Heart left ventricle (tissue), 16 donors: ENCODE measurements at regions of chr13 and their contacts with region 1.

Region 1: DNA sequence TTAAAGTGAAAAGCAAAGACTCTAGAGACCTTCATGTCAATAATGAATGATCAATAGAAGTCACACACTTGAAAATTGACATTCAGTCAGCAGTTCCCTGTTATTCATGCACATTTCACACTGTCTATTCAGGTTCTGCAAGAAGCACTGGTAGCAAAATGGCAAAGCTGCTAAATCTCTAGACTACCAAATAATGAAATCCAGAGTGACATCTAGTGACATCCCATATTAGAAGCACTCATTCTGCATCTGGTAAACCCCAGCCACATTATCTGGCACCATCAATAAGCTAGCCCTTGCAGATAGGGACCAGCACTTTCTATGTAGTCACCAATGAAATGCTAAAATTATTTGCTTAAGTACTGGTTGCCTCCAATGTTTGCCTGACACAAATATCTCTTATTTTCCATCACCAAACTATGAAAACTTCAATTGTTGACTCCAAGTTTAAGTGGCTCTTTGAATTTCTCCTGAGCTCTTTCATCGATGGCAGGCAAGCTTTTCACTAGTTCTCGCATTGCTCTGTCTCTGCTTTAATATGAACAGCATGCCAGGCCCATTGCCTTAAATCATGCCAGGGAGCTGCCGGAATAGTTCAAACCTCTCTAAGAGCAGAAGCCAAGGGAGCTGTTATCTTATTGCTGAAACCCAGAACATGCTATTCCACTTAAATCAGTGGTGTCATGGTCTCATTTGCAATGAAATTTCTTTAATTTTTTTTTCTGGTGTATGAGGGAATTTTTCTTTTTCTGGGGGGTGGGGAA is 409.9 kb downstream of the MZT1 start:
- DNase-seq: no peak
- ATAC-seq: no peak
- H3K4me3 ChIP-seq: no peak overlapping the region
- H3K27ac ChIP-seq: no peak overlapping the region
- H3K4me1 ChIP-seq: no peaks in the 10 kb centered on the region
- H3K27me3 ChIP-seq: no peaks in the 10 kb centered on the region
- CTCF ChIP-seq: no peak
- POLR2A ChIP-seq: no peak

Region 2: DNA sequence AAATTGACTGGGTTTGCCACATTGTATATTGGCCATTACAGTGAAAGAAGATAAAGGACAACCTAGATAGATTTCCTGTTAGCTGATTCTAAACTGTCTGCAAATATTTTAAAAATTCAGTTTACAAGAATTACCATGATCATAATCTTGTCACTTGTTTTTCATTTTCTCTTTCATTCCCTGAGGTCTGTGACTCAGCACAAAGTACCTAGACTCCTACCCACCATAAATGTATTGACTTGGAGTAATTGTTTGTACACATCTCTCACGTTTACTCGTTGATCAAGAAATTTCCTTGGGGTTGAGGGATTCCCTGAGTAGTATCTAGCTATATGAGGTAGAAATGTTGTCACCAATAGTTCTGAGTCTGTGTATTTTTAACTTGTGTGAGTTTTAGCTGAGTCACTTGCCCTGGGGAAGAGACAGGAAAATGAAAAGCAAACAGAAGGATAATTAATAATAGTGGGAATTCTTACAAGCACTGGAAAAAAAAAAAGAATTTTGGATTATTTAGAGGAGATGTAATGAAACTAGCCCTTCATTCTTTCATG is 151.4 kb before region 1 on chr13:
- intact Hi-C with region 1: no loop called
- DNase-seq: no peak
- ATAC-seq: no peak
- H3K4me3 ChIP-seq: no peak overlapping the region
- H3K27ac ChIP-seq: no peak overlapping the region
- H3K4me1 ChIP-seq: no peaks in the 10 kb centered on the region
- H3K27me3 ChIP-seq: no peaks in the 10 kb centered on the region
- CTCF ChIP-seq: no peak
- POLR2A ChIP-seq: no peak

Region 3: GRCh38 chr13:72303941-72304746 is 13.4 kb before region 1 on chr13:
- intact Hi-C with region 1: loop called in 1 of 10 experiments (anchors 2 kb)
- DNase-seq: no peak
- ATAC-seq: no peak
- H3K4me3 ChIP-seq: no peak overlapping the region
- H3K27ac ChIP-seq: no peak overlapping the region
- H3K4me1 ChIP-seq: no peaks in the 10 kb centered on the region
- H3K27me3 ChIP-seq: no peaks in the 10 kb centered on the region
- CTCF ChIP-seq: no peak
- POLR2A ChIP-seq: no peak

Region 4: DNA sequence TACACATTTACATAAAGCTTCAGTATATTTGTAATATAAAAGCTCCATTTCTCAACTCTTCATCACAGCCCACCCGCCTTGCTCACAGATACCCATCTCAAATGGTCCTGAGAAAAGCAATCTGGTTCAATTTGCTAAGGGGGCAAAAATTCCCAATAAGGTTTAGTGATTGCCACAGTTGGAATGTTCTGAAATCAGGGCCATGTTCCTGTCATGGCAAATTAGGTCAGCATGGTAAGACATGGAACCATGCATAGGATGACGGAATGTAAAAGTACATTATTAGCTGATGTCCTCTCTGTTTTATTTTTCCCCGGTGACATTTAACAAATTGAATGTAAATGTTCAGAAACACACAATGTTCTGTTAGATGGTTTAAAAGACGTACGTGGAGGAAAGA is 135.6 kb after region 1 on chr13:
- intact Hi-C with region 1: no loop called
- DNase-seq: no peak
- ATAC-seq: no peak
- H3K4me3 ChIP-seq: no peak overlapping the region
- H3K27ac ChIP-seq: no peak overlapping the region
- H3K4me1 ChIP-seq: no peaks in the 10 kb centered on the region
- H3K27me3 ChIP-seq: no peaks in the 10 kb centered on the region
- CTCF ChIP-seq: no peak
- POLR2A ChIP-seq: no peak